OCI-LY7 (cell line): ENCODE measurements at regions of chr6 and their contacts with region 1.

Region 1: GRCh38 chr6:157068691-157069324 is 254.5 kb downstream of the TMEM242 start:
- DNase-seq: no peak
- H3K4me3 ChIP-seq: no peak overlapping the region
- H3K27ac ChIP-seq: no peak overlapping the region
- H3K4me1 ChIP-seq: peaks cover 66% of the 10 kb centered on the region
- CTCF ChIP-seq: no peak

Region 2: GRCh38 chr6:156555116-156555515 is 513.7 kb before region 1 on chr6:
- CTCF ChIA-PET with region 1: no interaction called
- POLR2A ChIA-PET with region 1: no interaction called
- intact Hi-C with region 1: no loop called
- DNase-seq: no peak
- H3K4me3 ChIP-seq: no peak overlapping the region
- H3K27ac ChIP-seq: no peak overlapping the region
- H3K4me1 ChIP-seq: no peaks in the 10 kb centered on the region
- CTCF ChIP-seq: no peak

Region 3: DNA sequence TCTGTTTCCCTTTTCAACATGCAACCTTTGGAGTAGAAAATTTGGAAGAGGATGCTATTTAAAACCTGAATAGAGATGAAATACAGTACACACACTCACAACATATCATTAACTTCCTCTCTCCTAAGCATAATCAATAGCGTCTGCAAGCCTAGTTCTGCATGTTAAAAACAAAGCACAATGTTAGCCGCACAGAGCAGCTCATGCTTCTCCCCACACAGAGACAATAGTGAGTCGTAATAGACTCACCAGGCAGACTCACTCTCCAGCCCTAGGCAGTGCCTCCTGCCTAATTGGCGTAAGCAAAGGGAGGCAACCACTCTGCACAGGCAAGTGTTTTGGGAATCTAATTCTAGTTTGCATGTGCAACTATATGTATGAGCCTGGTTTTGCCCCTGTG is 337.4 kb before region 1 on chr6:
- CTCF ChIA-PET with region 1: no interaction called
- POLR2A ChIA-PET with region 1: no interaction called
- intact Hi-C with region 1: no loop called
- DNase-seq: no peak
- H3K4me3 ChIP-seq: no peak overlapping the region
- H3K27ac ChIP-seq: no peak overlapping the region
- H3K4me1 ChIP-seq: peaks cover 41% of the 10 kb centered on the region
- CTCF ChIP-seq: no peak

Region 4: GRCh38 chr6:156767603-156768467 is 301.0 kb before region 1 on chr6:
- CTCF ChIA-PET with region 1: no interaction called
- POLR2A ChIA-PET with region 1: no interaction called
- intact Hi-C with region 1: no loop called
- DNase-seq: peak; percentile 80
- H3K4me3 ChIP-seq: no peak overlapping the region
- H3K27ac ChIP-seq: no peak overlapping the region
- H3K4me1 ChIP-seq: peaks cover 26% of the 10 kb centered on the region
- CTCF ChIP-seq: no peak; the same call in 1 of the 2 replicates

Region 5: GRCh38 chr6:156879591-156879990 is 189.2 kb before region 1 on chr6:
- CTCF ChIA-PET with region 1: no interaction called
- POLR2A ChIA-PET with region 1: no interaction called
- intact Hi-C with region 1: no loop called
- DNase-seq: no peak
- H3K4me3 ChIP-seq: no peak overlapping the region
- H3K27ac ChIP-seq: no peak overlapping the region
- H3K4me1 ChIP-seq: peaks cover 39% of the 10 kb centered on the region
- CTCF ChIP-seq: no peak

Region 6: DNA sequence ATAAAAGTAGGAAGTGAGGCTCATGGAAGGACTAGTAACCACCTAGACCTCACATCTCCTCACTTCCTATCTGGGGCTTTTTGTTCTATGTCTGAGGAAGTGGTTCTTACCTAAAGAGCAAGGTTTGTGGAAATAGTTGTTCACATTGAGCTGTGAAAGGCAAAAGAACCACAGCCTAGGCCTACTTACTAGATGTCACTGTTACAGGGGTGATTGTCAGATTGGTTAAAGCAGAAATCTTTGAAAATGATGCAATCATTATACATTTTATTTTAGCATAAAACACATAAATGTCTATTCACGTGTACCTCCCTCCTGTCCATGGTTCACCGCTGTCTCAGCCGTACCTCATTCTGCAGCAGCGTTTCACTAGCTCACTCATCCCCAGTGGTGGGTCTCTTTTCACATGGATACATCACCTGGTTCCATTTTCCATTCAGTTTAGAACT is 14.3 kb before region 1 on chr6:
- CTCF ChIA-PET with region 1: no interaction called
- POLR2A ChIA-PET with region 1: interaction called, 20 read pairs
- intact Hi-C with region 1: no loop called
- DNase-seq: peak; percentile 61
- H3K4me3 ChIP-seq: no peak overlapping the region
- H3K27ac ChIP-seq: no peak overlapping the region
- H3K4me1 ChIP-seq: peaks cover 26% of the 10 kb centered on the region
- CTCF ChIP-seq: no peak

Region 7: GRCh38 chr6:157079771-157080170 is 11.0 kb after region 1 on chr6:
- CTCF ChIA-PET with region 1: no interaction called
- POLR2A ChIA-PET with region 1: interaction called, 18 read pairs
- intact Hi-C with region 1: no loop called
- DNase-seq: no peak
- H3K4me3 ChIP-seq: no peak overlapping the region
- H3K27ac ChIP-seq: no peak overlapping the region
- H3K4me1 ChIP-seq: peaks cover 20% of the 10 kb centered on the region
- CTCF ChIP-seq: no peak